ENCODE measurements at regions of chr11 and their contacts with region 1.

Region 1: DNA sequence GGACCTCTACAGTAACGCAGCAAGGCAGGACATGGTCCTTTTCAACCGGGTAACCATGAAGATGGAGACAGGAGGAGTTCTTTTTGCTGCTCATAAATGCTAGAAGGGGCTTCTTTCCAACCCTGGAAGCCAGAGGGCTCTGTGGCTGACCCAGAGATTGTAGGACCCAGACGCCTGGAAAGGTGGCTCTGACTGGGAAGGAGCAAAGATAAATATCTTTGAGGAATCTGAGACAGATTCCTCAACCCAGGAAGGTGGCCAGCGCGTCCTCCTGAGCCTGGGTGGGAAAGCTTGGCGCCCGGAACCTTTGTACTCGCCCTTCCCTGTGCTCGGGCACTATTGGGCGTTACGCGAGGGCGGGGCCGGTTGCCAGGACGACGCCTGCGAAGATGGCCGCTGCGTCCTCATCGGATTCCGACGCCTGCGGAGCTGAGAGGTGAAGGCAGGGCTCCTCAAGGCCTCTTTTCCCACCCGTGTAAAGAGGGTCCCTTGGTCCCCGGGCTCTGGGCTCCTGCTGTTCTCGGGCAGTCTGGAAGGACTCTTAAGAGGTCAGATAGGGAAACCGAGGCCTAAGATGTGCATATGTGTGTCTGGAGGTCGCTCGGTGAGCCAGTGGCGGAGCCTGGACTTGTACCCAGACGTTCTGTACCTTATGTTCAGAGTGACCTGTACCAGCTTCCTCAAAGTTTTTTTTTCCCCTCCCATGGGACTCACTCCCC is at the start of gene BBS1:
- DNase-seq: peak; percentile 73 to 90 (median 80)
- ATAC-seq: peak; percentile 99
- H3K4me3 ChIP-seq: peak within 1 kb of the TSS; percentile 77
- H3K4me3 Mint-ChIP-seq: peak within 1 kb of the TSS; percentile 90
- H3K27ac ChIP-seq: no peak within 1 kb of the TSS
- H3K27ac Mint-ChIP-seq: peak within 1 kb of the TSS; percentile 61
- H3K4me1 ChIP-seq: peaks cover 14% of the 10 kb centered on the region
- H3K4me1 Mint-ChIP-seq: peaks cover 16% of the 10 kb centered on the region
- H3K27me3 ChIP-seq: no peaks in the 10 kb centered on the region
- H3K27me3 Mint-ChIP-seq: no peaks in the 10 kb centered on the region
- CTCF ChIP-seq: no peak
- total RNA-seq, gene BBS1: 11.7 to 11.9 TPM

Region 2: DNA sequence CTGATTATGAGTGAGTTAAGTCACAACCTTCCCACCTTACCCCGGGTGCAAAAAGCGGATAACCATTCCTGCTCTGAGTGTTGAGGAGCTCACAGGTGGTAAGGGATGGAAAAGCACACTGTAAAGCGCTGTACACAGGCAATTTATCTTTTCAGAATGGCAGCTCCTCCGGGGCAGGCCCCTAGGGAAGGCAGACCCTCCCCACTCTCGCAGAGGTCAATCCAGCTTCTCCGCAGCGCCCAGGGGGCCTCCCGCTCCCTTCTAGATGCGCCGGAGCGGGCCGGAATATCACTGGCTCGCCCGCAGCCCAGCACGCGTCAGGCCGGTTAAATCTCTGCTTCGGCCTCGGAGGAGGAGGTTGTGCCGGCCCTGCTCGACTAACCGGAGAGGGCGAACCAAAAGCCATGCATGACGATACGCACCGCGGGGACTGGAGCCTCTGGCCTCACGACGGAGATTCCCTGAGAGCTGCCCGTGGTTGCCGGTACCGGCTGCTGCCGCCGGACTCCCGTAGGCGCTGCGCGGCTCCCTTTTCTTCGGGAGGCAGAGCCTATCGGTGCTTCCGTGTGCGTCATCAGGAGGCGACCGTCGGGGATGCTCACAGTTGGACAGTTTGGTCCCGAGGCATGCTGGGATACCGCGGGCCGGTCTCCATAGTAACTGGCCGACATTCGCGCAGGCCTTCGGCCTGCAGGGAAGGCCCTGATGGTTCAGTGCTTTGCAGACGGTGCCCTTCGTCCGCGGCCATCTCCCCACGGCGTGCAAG is 165.7 kb before region 1 on chr11 and contains the start of gene BRMS1:
- CTCF ChIA-PET with region 1: no interaction called
- POLR2A ChIA-PET with region 1: no interaction called
- intact Hi-C with region 1: no loop called
- DNase-seq: peak; percentile 86 to 98 (median 96)
- ATAC-seq: peak; percentile 80
- H3K4me3 ChIP-seq: peak within 1 kb of the TSS; percentile 100
- H3K4me3 Mint-ChIP-seq: peak within 1 kb of the TSS; percentile 97
- H3K27ac ChIP-seq: peak within 1 kb of the TSS; percentile 75 to 78
- H3K27ac Mint-ChIP-seq: peak within 1 kb of the TSS; percentile 94
- H3K4me1 ChIP-seq: peaks cover 56% of the 10 kb centered on the region
- H3K4me1 Mint-ChIP-seq: peaks cover 48% of the 10 kb centered on the region
- H3K27me3 ChIP-seq: no peaks in the 10 kb centered on the region
- H3K27me3 Mint-ChIP-seq: peaks cover 5% of the 10 kb centered on the region
- CTCF ChIP-seq: no peak
- total RNA-seq, gene BRMS1: 52.7 to 58.4 TPM

Region 3: GRCh38 chr11:66480117-66480938 is 30.1 kb before region 1 on chr11 and contains the start of gene DPP3:
- CTCF ChIA-PET with region 1: no interaction called
- POLR2A ChIA-PET with region 1: interaction called, 11 read pairs
- intact Hi-C with region 1: loop called in 1 of 2 experiments (anchors 2 kb)
- DNase-seq: peak; percentile 91 to 97 (median 95)
- ATAC-seq: peak; percentile 98
- H3K4me3 ChIP-seq: peak within 1 kb of the TSS; percentile 79
- H3K4me3 Mint-ChIP-seq: peak within 1 kb of the TSS; percentile 91
- H3K27ac ChIP-seq: peak within 1 kb of the TSS; percentile 70 to 79
- H3K27ac Mint-ChIP-seq: peak within 1 kb of the TSS; percentile 83
- H3K4me1 ChIP-seq: peaks cover 29% of the 10 kb centered on the region
- H3K4me1 Mint-ChIP-seq: peaks cover 24% of the 10 kb centered on the region
- H3K27me3 ChIP-seq: no peaks in the 10 kb centered on the region
- H3K27me3 Mint-ChIP-seq: no peaks in the 10 kb centered on the region
- CTCF ChIP-seq: no peak
- total RNA-seq, gene DPP3: 16.9 to 17.7 TPM

Measured in CD4-positive, alpha-beta T cell (primary cell).